Common myeloid progenitor, CD34-positive (primary cell): ENCODE measurements at regions of chr7 and their contacts with region 1.

Region 1: DNA sequence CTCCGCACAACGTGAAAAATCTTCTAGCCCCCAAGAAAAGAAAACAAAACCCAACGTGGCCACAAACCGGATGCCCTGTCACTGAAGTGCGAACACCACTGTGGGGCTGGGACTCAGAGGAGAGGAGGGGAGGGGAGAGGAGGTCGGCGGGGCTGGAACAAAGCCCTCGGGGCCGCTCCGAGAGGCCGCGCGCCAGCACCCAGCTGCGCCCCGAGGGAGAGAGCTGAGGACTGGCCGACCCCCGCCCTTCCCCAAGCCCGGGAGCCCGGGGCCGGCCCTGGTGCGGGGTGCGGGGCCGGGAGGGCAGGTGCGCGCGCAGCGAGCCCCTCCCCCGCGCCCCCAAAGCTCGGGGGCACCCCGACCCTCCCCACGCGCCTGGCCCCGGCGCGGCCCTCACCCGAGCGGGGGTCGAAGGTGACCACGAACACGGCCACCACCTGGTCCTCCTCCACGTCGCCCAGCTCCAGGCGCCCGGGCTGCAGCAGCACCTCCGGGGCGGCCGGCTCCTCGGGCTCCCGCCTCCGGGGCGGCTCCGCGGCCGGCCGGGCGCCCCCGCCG is 398 bp downstream of the DENND11 start:
- DNase-seq: peak; percentile 65 to 91 (median 89)
- H3K4me3 ChIP-seq: peak overlapping the region; percentile 69 to 91 (median 77)
- H3K27ac ChIP-seq: peak overlapping the region in 1 of 2 experiments; percentile 75
- H3K4me1 ChIP-seq: peaks cover 0 to 53% (median 27%) of the 10 kb centered on the region in 4 experiments
- H3K27me3 ChIP-seq: peaks cover 0 to 3% (median 0%) of the 10 kb centered on the region in 5 experiments

Region 2: DNA sequence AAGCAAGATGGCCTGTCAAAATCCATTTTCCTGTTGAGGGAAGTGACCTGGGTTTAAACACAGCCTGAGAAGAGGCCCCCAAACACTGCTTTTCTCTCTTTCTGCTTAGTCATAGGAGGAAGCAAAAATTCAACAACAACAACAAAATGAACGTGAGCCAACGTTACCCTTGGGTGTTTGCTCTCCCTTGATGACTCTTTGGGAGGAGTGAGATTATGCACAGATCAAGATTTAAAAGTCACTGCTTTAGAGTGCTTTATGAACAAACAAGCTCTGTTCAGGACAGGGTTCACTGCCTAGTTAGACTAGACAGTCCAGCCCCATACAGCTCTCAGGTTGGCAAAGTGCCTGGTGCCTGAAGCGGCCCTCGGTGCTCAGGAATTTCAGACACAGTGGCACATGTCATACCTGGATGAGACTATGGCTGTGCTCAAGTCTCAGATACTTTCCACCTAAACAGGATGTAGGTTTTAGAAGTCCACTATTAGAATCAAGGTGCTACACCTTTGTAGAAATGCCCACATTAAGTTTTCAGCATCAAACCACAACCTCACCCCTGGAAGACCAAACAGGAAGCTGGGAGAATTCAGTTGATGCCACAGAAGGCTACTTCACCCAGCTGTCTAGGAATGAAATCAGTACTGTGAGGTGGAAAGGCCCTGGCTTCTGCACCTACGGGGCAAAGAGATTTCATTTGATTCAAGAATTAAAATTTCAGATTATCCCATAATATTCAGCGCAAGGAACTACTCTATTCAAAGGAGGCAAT is 38.3 kb before region 1 on chr7:
- CTCF ChIA-PET with region 1: interaction called, 4 read pairs
- POLR2A ChIA-PET with region 1: interaction called, 12 read pairs
- DNase-seq: peak; percentile 12 to 76 (median 67)
- H3K4me3 ChIP-seq: peak overlapping the region in 2 of 7 experiments; percentile 7 to 11
- H3K27ac ChIP-seq: peak overlapping the region; percentile 10 to 68
- H3K4me1 ChIP-seq: peaks cover 13 to 52% (median 46%) of the 10 kb centered on the region in 4 experiments
- H3K27me3 ChIP-seq: no peaks in the 10 kb centered on the region